ENCODE measurements at regions of chr12 and their contacts with region 1.

Region 1: GRCh38 chr12:72271451-72272090 is 599 bp upstream of the TRHDE start:
- DNase-seq: peak; percentile 22 to 51 (median 46)
- ATAC-seq: peak; percentile 15 to 44 (median 30)
- H3K4me3 ChIP-seq: peak overlapping the region; percentile 33 to 54 (median 44)
- H3K27ac ChIP-seq: peak overlapping the region in 1 of 3 donors; percentile 33
- H3K4me1 ChIP-seq: peaks cover 0 to 12% (median 2%) of the 10 kb centered on the region in 4 donors
- H3K27me3 ChIP-seq: no peaks in the 10 kb centered on the region
- CTCF ChIP-seq: no peak
- POLR2A ChIP-seq: no peak

Region 2: DNA sequence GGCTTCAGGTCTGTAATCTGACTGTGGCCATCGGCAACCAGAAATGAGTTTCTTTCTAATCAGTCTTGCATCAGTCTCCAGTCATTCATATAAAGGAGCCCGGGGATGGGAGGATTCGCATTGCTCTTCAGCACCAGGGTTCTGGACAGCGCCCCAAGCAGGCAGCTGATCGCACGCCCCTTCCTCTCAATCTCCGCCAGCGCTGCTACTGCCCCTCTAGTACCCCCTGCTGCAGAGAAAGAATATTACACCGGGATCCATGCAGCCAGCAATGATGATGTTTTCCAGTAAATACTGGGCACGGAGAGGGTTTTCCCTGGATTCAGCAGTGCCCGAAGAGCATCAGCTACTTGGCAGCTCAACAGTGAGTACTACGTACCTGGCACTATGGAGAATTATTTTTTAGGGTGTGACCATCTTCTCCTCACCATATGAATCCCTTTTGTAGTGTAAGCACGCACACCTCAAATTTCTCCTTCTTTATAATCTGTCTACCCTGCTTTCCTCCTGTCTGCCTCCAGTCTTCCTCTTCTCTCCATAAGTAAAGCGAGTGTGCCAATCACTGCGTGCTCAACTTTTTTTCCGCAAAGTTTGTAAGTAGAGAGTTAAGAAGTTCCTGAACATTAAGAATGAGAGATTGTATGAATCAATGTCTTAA is 332.7 kb before region 1 on chr12 and contains the start of gene TPH2:
- intact Hi-C with region 1: loop called in 1 of 2 experiments (anchors 10 kb)
- DNase-seq: peak; percentile 48 to 60 (median 60)
- ATAC-seq: peak; percentile 85 to 95 (median 90)
- H3K4me3 ChIP-seq: no peak within 1 kb of the TSS
- H3K27ac ChIP-seq: no peak within 1 kb of the TSS
- H3K4me1 ChIP-seq: no peaks in the 10 kb centered on the region
- H3K27me3 ChIP-seq: peaks cover 0 to 5% of the 10 kb centered on the region in 2 donors
- CTCF ChIP-seq: peak; percentile 34 to 50 (median 38)
- POLR2A ChIP-seq: no peak
- total RNA-seq, gene TPH2: 0.13 TPM in 1 of 6 experiments, not detected in the others

Measured in right lobe of liver (tissue), 6 donors.